ENCODE measurements at regions of chr1 and their contacts with region 1.

Region 1: GRCh38 chr1:112896783-112897182 is 59.2 kb downstream of the SLC16A1 start:
- DNase-seq: no peak
- ATAC-seq: no peak
- H3K4me3 ChIP-seq: no peak overlapping the region
- H3K27ac ChIP-seq: no peak overlapping the region
- H3K4me1 ChIP-seq: no peaks in the 10 kb centered on the region
- H3K27me3 ChIP-seq: no peaks in the 10 kb centered on the region
- CTCF ChIP-seq: no peak

Region 2: GRCh38 chr1:112911506-112911905 is 14.7 kb after region 1 on chr1:
- CTCF ChIA-PET with region 1: no interaction called
- POLR2A ChIA-PET with region 1: no interaction called
- in situ Hi-C with region 1: no loop called
- intact Hi-C with region 1: no loop called
- DNase-seq: no peak
- ATAC-seq: no peak
- H3K4me3 ChIP-seq: no peak overlapping the region
- H3K27ac ChIP-seq: no peak overlapping the region
- H3K4me1 ChIP-seq: no peaks in the 10 kb centered on the region
- H3K27me3 ChIP-seq: no peaks in the 10 kb centered on the region
- CTCF ChIP-seq: no peak

Region 3: GRCh38 chr1:112937070-112937469 is 40.3 kb after region 1 on chr1:
- CTCF ChIA-PET with region 1: interaction called, 10 read pairs
- POLR2A ChIA-PET with region 1: no interaction called
- in situ Hi-C with region 1: no loop called
- intact Hi-C with region 1: no loop called
- DNase-seq: no peak
- ATAC-seq: no peak
- H3K4me3 ChIP-seq: no peak overlapping the region
- H3K27ac ChIP-seq: no peak overlapping the region
- H3K4me1 ChIP-seq: peaks cover 6% of the 10 kb centered on the region
- H3K27me3 ChIP-seq: no peaks in the 10 kb centered on the region
- CTCF ChIP-seq: no peak